Posterior vena cava (tissue), 2 donors: ENCODE measurements at regions of chr12 and their contacts with region 1.

Region 1: GRCh38 chr12:132414634-132415326 is 75.2 kb upstream of the FBRSL1 start:
- DNase-seq: peak; percentile 93

Region 2: GRCh38 chr12:131783915-131784541 is 630.8 kb before region 1 on chr12:
- intact Hi-C with region 1: no loop called
- DNase-seq: no peak

Region 3: DNA sequence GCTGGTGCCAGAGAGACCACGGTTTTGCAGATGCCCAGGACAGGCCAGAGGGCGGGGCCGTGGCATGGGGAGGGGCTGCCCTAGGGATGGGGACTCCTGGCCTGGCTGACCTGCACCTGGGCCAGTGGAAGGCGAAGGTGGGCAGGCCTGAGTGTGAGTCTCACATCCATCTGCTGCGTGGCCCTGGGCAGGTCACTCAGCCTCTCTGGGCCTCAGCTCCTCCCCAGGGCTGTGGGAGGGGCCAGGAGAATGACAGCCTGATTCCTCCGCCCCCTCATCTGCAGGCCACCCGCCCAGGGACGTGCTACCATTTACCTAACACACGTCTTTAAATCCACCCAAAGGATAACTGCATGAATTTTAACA is 176.3 kb before region 1 on chr12:
- intact Hi-C with region 1: no loop called
- DNase-seq: peak; percentile 42

Region 4: GRCh38 chr12:132385923-132386751 is 28.6 kb before region 1 on chr12:
- intact Hi-C with region 1: no loop called
- DNase-seq: peak; percentile 73

Region 5: DNA sequence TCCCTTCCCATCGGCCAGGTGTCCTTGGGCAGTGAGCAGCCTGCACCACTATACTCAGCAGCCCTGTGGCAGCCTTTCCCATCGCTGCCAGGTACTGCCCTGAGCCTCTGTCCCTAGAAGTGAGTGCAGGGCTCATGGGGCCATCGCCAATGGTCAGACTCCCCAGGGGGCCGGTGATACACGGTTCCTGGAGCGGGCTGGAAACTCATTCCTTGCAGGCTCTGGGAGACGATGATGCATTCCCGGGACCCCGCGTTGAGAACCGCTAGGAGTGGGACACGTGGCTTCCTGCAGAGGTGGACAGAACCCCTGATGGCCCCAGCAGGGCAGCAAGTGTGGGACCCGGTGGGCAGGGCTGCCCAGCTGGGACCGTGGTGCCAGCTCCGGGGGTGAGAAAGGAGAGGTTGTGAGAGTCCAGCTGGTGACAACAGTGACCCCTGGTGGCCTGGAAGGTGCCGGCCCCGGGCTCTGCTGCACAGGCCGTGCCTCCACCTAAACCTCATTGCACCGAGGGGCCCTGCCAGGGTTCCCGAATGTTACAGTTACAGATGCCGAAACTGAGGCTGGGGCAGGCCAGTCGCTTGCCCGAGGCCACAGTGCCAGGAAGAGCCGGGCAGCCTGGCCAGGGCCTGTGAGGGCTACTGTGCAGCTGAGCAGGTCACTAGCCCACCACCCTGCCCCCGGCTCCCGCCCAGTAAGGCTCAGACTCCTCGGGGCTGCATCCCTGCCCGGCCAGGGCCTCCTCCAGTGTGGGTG is 109.0 kb after region 1 on chr12:
- intact Hi-C with region 1: loop called in 1 of 2 experiments (anchors 10 kb)
- DNase-seq: peak; percentile 92

Region 6: DNA sequence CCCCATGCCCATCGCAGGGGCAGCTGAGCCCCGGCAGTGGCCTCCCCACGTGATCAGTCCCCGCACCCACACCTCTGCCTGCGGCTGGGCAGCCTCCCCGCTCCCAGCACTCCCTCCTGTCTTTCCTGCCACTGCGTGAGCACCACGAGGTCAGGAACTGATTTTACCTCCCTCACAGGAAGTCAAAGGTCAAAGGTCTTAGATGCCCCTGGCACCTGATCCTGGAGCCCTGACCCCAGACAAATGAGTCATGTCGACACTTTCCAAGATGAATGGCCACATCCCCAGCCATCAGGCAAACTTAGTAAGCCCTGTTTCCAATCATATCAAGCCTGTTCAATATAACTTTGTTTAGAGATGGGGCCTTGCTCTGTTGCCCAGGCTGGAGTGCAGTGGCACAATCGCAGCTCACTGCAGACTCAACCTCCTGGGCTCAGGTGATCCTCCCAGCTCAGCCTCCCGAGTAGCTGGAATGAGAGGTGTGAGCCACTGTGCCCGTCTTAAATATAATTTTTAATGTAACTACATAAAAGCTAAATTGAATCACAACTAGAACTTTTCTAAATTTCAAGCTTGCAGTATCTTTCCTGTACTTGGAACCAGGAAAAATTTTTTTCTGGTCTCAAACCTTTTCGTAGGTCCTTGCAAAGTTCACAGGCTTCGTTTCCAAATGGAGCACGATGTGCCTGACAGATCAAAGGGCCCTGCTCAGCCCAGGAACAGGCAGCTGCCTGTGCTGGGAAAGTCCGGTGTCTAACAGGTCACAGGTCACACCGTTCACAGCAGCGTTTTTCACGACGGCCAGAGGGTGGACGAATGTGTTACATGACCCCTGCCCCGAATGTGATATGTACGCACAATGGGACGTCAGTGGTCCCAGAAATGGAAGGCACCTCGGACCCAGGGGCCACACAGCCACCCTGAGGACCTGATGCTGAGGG is 193.7 kb after region 1 on chr12:
- intact Hi-C with region 1: loop called (anchors 5 kb)
- DNase-seq: no peak

Region 7: DNA sequence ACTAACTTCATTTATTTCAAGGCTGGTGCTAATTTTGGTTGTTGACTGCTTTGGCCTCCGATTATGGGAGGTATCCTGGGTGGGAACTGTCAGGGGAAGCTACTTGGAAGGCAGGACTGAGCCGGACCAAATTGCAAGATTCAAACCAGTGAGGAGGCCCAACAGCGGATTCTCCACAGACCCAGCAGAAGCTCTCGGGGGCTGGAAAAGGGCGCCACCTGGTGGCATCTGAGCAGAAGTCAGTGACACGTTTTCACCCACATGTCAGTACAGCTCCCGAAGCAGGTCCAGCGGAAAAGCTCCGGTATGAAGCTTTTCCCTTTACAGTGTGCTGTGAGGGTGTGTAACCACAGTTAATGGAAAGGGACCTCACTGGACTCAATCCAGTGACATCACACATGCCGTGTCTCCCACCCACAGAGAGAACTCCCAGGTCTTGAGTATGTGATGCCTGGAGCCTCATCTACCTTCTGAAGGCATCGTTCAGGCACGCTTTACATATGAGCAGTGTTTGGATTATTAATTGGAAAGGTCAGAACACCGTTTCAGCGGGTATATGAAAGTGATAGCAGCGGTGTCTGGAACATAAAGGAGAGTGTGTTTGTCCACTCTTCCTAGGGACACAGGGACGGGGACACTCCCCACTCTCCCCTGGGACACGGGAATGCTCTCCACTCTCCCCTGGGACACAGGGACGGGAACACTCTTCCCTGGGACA is 200.2 kb after region 1 on chr12:
- intact Hi-C with region 1: loop called (anchors 5 kb)
- DNase-seq: peak; percentile 95